Heart left ventricle (tissue), 16 donors: ENCODE measurements at regions of chr16 and their contacts with region 1.

Region 1: GRCh38 chr16:76511203-76511602 is 234.0 kb downstream of the CNTNAP4 start:
- DNase-seq: no peak
- ATAC-seq: no peak
- H3K4me3 ChIP-seq: no peak overlapping the region
- H3K27ac ChIP-seq: no peak overlapping the region
- H3K4me1 ChIP-seq: no peaks in the 10 kb centered on the region
- H3K27me3 ChIP-seq: no peaks in the 10 kb centered on the region
- CTCF ChIP-seq: no peak
- POLR2A ChIP-seq: no peak

Region 2: DNA sequence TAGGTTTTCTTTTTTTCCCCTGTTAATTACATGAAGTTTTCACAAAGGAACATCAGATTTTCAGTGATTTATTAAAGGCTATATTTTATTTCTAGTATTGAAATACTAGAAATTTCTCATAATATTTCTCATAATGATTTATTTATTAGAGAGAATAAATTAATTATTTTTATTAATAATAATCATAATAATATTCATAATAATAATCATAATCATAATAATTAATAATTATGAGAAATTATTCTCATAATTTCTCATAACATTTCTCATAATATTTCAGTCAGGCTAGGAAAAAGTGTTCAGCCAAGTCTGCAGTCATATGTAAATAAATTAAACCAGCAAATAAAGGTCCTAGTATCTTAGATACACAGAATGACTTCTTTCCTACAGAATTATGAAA is 192.6 kb before region 1 on chr16:
- intact Hi-C with region 1: no loop called
- DNase-seq: no peak
- ATAC-seq: no peak
- H3K4me3 ChIP-seq: no peak overlapping the region
- H3K27ac ChIP-seq: no peak overlapping the region
- H3K4me1 ChIP-seq: no peaks in the 10 kb centered on the region
- H3K27me3 ChIP-seq: peaks cover 0 to 3% (median 0%) of the 10 kb centered on the region in 9 donors
- CTCF ChIP-seq: no peak
- POLR2A ChIP-seq: no peak

Region 3: DNA sequence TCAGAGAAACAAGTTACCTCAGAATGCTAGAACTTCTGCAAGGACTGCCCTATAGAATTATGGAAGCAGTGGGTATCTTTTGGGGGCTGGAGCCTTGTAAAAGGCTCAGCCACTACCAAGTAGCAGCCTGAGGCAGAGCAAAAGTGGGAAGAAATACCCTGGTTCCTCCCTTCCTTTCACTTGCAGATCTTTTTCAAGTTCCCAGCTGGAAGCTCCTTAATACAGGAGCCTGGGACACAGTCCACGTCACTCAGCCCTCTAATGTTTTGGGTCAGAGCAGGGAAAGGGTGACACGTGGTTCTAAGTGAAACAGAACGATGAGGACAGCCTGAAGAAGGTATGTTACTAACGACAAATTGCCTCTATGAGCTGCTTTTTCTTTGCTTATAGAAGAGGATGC is 140.9 kb before region 1 on chr16:
- intact Hi-C with region 1: no loop called
- DNase-seq: no peak
- ATAC-seq: no peak
- H3K4me3 ChIP-seq: no peak overlapping the region
- H3K27ac ChIP-seq: no peak overlapping the region
- H3K4me1 ChIP-seq: no peaks in the 10 kb centered on the region
- H3K27me3 ChIP-seq: no peaks in the 10 kb centered on the region
- CTCF ChIP-seq: no peak
- POLR2A ChIP-seq: no peak

Region 4: GRCh38 chr16:76464955-76465638 is 46.1 kb before region 1 on chr16:
- intact Hi-C with region 1: loop called in 1 of 10 experiments (anchors 5 kb)
- DNase-seq: no peak
- ATAC-seq: no peak
- H3K4me3 ChIP-seq: no peak overlapping the region
- H3K27ac ChIP-seq: no peak overlapping the region
- H3K4me1 ChIP-seq: no peaks in the 10 kb centered on the region
- H3K27me3 ChIP-seq: no peaks in the 10 kb centered on the region
- CTCF ChIP-seq: no peak
- POLR2A ChIP-seq: no peak